ENCODE measurements at regions of chr14 and their contacts with region 1.

Region 1: GRCh38 chr14:70816525-70816924 is 7.2 kb upstream of the MAP3K9 start:
- DNase-seq: no peak
- ATAC-seq: no peak
- H3K4me3 ChIP-seq: no peak overlapping the region
- H3K4me3 Mint-ChIP-seq: no peak overlapping the region
- H3K27ac ChIP-seq: no peak overlapping the region
- H3K27ac Mint-ChIP-seq: no peak overlapping the region
- H3K4me1 ChIP-seq: peaks cover 8% of the 10 kb centered on the region
- H3K4me1 Mint-ChIP-seq: peaks cover 11% of the 10 kb centered on the region
- H3K27me3 ChIP-seq: no peaks in the 10 kb centered on the region
- H3K27me3 Mint-ChIP-seq: peaks cover 3% of the 10 kb centered on the region
- CTCF ChIP-seq: no peak

Region 2: GRCh38 chr14:70086685-70087379 is 729.7 kb before region 1 on chr14:
- CTCF ChIA-PET with region 1: no interaction called
- POLR2A ChIA-PET with region 1: no interaction called
- intact Hi-C with region 1: loop called in 1 of 2 experiments (anchors 5 kb)
- DNase-seq: peak in 2 of 9 experiments; percentile 1 to 6
- ATAC-seq: no peak
- H3K4me3 ChIP-seq: no peak overlapping the region
- H3K4me3 Mint-ChIP-seq: no peak overlapping the region
- H3K27ac ChIP-seq: no peak overlapping the region
- H3K27ac Mint-ChIP-seq: no peak overlapping the region
- H3K4me1 ChIP-seq: no peaks in the 10 kb centered on the region
- H3K4me1 Mint-ChIP-seq: no peaks in the 10 kb centered on the region
- H3K27me3 ChIP-seq: peaks cover 0 to 3% of the 10 kb centered on the region in 2 experiments
- H3K27me3 Mint-ChIP-seq: peaks cover 26% of the 10 kb centered on the region
- CTCF ChIP-seq: no peak

Region 3: DNA sequence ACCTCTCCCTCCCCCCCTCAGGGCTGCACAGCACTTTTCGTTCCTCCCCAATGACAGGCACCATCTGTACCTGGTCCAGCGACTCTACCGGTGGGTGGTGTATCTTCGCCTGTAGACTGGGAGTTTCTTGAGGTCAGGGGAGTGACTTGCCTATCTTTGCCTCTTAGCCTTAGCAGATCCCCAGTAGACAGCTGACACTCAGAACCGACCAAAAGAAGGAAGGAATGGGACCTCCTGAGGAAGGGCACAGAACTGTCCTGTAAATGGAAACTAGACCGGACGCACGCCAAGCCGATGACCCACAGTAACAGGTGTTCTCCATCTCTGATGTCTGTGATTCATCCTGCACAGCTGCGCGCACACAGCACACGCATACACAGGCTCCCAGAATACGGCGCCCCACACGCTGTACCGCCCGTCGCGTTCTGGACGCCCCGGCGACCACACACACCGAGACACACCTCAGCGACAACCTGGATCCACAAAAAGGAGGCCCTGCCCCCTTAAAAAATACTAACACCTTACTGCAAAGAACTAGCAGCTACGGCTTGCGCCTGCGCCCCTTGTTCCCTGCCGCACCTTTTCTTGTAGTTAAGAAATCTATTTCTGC is 175.5 kb before region 1 on chr14:
- CTCF ChIA-PET with region 1: interaction called, 8 read pairs
- POLR2A ChIA-PET with region 1: no interaction called
- intact Hi-C with region 1: loop called in 1 of 2 experiments (anchors 5 kb)
- DNase-seq: peak in 7 of 9 experiments; percentile 30 to 79 (median 66)
- ATAC-seq: peak; percentile 66
- H3K4me3 ChIP-seq: peak overlapping the region; percentile 59 to 63
- H3K4me3 Mint-ChIP-seq: peak overlapping the region; percentile 99
- H3K27ac ChIP-seq: peak overlapping the region; percentile 24 to 26
- H3K27ac Mint-ChIP-seq: peak overlapping the region; percentile 97
- H3K4me1 ChIP-seq: peaks cover 33% of the 10 kb centered on the region
- H3K4me1 Mint-ChIP-seq: peaks cover 51% of the 10 kb centered on the region
- H3K27me3 ChIP-seq: no peaks in the 10 kb centered on the region
- H3K27me3 Mint-ChIP-seq: no peaks in the 10 kb centered on the region
- CTCF ChIP-seq: no peak

Region 4: DNA sequence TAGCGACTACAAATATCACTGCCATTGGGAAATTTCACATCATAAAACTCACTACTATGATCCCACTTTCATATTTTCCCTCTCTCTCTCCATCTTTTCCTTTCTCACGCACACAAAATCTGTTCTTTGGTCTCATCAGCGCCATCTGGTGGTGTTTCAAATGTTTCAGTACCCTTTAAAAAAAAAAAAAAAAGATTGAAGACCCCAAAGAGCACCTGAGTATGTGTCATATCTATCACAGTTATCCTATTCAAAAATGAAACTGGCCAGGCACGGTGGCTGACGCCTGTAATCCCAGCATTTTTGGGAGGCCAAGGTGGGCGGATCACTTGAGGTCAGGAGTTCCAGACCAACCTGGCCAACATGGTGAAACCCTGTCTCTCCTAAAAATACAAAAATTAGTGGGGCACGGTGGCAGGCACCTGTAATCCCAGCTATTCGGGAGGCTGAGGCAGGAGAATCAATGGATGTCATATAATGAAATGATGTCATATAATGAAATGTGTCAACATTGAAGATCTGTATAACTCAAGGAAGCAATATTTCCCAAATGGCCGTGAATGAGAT is 102.4 kb before region 1 on chr14:
- CTCF ChIA-PET with region 1: interaction called, 25 read pairs
- POLR2A ChIA-PET with region 1: no interaction called
- intact Hi-C with region 1: loop called (anchors 1 to 2 kb)
- DNase-seq: peak in 8 of 9 experiments; percentile 29 to 82 (median 60)
- ATAC-seq: peak; percentile 36
- H3K4me3 ChIP-seq: no peak overlapping the region
- H3K4me3 Mint-ChIP-seq: no peak overlapping the region
- H3K27ac ChIP-seq: no peak overlapping the region
- H3K27ac Mint-ChIP-seq: no peak overlapping the region
- H3K4me1 ChIP-seq: peaks cover 3% of the 10 kb centered on the region
- H3K4me1 Mint-ChIP-seq: peaks cover 4% of the 10 kb centered on the region
- H3K27me3 ChIP-seq: no peaks in the 10 kb centered on the region
- H3K27me3 Mint-ChIP-seq: peaks cover 3% of the 10 kb centered on the region
- CTCF ChIP-seq: peak; percentile 95

Region 5: GRCh38 chr14:70754989-70755388 is 61.5 kb before region 1 on chr14:
- CTCF ChIA-PET with region 1: interaction called, 11 read pairs
- POLR2A ChIA-PET with region 1: no interaction called
- intact Hi-C with region 1: no loop called
- DNase-seq: no peak
- ATAC-seq: no peak
- H3K4me3 ChIP-seq: no peak overlapping the region
- H3K4me3 Mint-ChIP-seq: no peak overlapping the region
- H3K27ac ChIP-seq: no peak overlapping the region
- H3K27ac Mint-ChIP-seq: no peak overlapping the region
- H3K4me1 ChIP-seq: no peaks in the 10 kb centered on the region
- H3K4me1 Mint-ChIP-seq: no peaks in the 10 kb centered on the region
- H3K27me3 ChIP-seq: no peaks in the 10 kb centered on the region
- H3K27me3 Mint-ChIP-seq: no peaks in the 10 kb centered on the region
- CTCF ChIP-seq: no peak

Region 6: DNA sequence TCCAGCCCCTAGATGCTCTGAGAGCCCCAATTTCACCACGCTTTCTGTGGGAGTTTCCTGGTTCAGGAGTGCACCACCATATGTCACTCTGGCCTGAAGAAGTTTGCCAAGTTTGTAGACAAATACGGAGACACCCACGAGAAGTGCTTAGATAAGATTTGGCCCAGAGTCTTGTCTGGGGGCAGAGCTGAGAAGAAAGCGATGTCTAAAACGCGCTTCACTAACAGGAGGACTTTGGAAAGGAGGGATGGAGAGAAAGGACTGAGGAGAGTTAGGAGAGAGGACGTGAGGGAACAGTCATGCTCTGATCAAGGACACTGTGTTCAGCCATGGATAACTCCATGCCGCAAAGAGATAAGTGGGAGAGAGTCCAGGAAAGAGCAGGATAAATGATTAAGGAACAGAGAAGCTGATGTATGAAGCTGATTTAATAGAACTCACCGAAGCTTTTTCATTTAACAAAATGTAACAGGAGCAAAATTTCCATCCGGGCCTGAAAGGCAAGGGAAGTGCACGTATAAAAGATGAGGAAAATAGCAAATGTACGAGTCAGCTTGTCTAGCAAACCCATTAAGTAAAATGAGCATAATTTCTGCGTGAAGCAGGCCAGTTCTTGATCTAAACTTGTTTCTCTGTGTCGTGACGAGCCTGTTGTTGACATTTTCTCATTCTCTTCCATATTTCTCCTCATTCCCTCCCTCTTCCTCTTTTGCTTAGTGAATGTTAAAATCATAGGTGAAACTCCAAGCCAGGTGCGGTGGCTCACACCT is 16.2 kb after region 1 on chr14:
- CTCF ChIA-PET with region 1: interaction called, 45 read pairs
- POLR2A ChIA-PET with region 1: no interaction called
- intact Hi-C with region 1: no loop called
- DNase-seq: no peak
- ATAC-seq: no peak
- H3K4me3 ChIP-seq: no peak overlapping the region
- H3K4me3 Mint-ChIP-seq: no peak overlapping the region
- H3K27ac ChIP-seq: no peak overlapping the region
- H3K27ac Mint-ChIP-seq: no peak overlapping the region
- H3K4me1 ChIP-seq: no peaks in the 10 kb centered on the region
- H3K4me1 Mint-ChIP-seq: no peaks in the 10 kb centered on the region
- H3K27me3 ChIP-seq: no peaks in the 10 kb centered on the region
- H3K27me3 Mint-ChIP-seq: no peaks in the 10 kb centered on the region
- CTCF ChIP-seq: no peak

Region 7: GRCh38 chr14:70955543-70956480 is 139.3 kb after region 1 on chr14:
- CTCF ChIA-PET with region 1: interaction called, 54 read pairs
- POLR2A ChIA-PET with region 1: interaction called, 4 read pairs
- intact Hi-C with region 1: loop called (anchors 1 kb)
- DNase-seq: peak; percentile 10 to 78 (median 55)
- ATAC-seq: peak; percentile 94
- H3K4me3 ChIP-seq: no peak overlapping the region
- H3K4me3 Mint-ChIP-seq: no peak overlapping the region
- H3K27ac ChIP-seq: no peak overlapping the region
- H3K27ac Mint-ChIP-seq: no peak overlapping the region
- H3K4me1 ChIP-seq: peaks cover 20% of the 10 kb centered on the region
- H3K4me1 Mint-ChIP-seq: peaks cover 35% of the 10 kb centered on the region
- H3K27me3 ChIP-seq: no peaks in the 10 kb centered on the region
- H3K27me3 Mint-ChIP-seq: no peaks in the 10 kb centered on the region
- CTCF ChIP-seq: peak; percentile 90

Measured in CD8-positive, alpha-beta T cell (primary cell).